OCI-LY7 (cell line): ENCODE measurements at regions of chr7 and their contacts with region 1.

Region 1: GRCh38 chr7:43700059-43700501 is 29.2 kb downstream of the COA1 start:
- DNase-seq: peak; percentile 77
- H3K4me3 ChIP-seq: no peak overlapping the region
- H3K27ac ChIP-seq: no peak overlapping the region
- H3K4me1 ChIP-seq: peaks cover 21% of the 10 kb centered on the region
- CTCF ChIP-seq: peak; percentile 95

Region 2: GRCh38 chr7:43439631-43440401 is 260.3 kb before region 1 on chr7:
- CTCF ChIA-PET with region 1: no interaction called
- POLR2A ChIA-PET with region 1: no interaction called
- intact Hi-C with region 1: loop called (anchors 10 kb)
- DNase-seq: peak; percentile 71
- H3K4me3 ChIP-seq: no peak overlapping the region
- H3K27ac ChIP-seq: no peak overlapping the region
- H3K4me1 ChIP-seq: no peaks in the 10 kb centered on the region
- CTCF ChIP-seq: peak; percentile 92

Region 3: DNA sequence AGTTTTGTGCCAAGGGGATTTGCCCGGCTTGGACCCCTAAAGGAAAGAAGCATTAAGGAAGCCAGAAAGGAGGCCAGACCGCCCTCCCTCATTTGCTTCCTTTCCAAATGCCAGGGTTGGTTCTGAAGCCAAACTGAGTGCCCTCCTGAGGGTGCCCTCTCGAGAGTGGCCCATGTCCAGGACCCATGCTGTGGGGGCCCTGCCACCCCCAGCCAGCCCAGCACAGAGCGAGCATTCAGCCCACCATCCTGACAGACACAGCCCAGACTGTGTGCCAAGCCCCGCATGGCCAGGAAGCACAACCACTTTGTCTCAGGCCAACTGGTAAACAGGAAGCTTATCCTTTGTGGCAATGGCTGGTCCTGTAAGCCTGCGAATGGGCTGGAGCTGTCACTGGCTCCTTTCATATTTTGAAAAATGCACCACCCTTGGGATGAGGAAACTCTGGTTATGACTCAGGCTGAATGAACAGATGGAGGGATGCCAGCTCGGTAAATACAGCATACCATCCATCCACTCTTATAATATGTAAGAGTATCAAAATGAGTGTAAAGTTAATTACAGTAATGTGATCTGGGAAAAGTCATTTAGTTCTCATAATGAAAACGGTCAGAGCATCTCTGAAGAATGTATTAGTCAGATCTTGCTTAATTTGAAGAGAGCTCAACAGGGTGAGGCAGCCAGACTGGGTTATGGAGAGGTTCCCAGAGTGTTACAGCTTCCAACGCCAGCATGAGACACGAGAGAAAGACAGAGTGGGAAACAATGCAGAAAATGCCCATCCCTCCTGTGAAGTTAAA is 52.2 kb before region 1 on chr7:
- CTCF ChIA-PET with region 1: no interaction called
- POLR2A ChIA-PET with region 1: interaction called, 11 read pairs
- intact Hi-C with region 1: loop called (anchors 2 kb)
- DNase-seq: peak; percentile 57
- H3K4me3 ChIP-seq: peak overlapping the region; percentile 64
- H3K27ac ChIP-seq: peak overlapping the region; percentile 97
- H3K4me1 ChIP-seq: peaks cover 82% of the 10 kb centered on the region
- CTCF ChIP-seq: no peak

Region 4: DNA sequence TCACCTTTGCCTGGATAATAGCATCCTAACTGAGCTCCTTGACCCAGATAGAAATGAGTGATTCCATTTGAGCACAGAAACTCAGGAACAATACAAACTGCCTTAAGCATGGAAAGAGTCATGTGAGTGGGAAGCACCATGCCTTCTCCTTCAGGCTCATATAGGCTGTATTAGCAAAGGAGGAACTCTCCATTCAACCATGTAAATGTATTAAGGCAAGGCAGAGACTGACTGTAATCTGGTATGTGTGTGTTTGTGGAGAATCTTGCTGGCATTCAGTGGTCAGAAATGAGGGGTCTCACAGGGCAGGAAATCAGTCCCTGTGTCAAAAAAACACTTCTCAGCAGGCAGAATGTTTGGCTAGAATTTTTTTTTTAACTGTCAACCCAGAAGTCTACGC is 11.0 kb before region 1 on chr7:
- CTCF ChIA-PET with region 1: no interaction called
- POLR2A ChIA-PET with region 1: interaction called, 21 read pairs
- intact Hi-C with region 1: no loop called
- DNase-seq: no peak
- H3K4me3 ChIP-seq: no peak overlapping the region
- H3K27ac ChIP-seq: no peak overlapping the region
- H3K4me1 ChIP-seq: no peaks in the 10 kb centered on the region
- CTCF ChIP-seq: no peak

Region 5: GRCh38 chr7:43834463-43835251 is 134.6 kb after region 1 on chr7:
- CTCF ChIA-PET with region 1: no interaction called
- POLR2A ChIA-PET with region 1: no interaction called
- intact Hi-C with region 1: loop called (anchors 1 kb)
- DNase-seq: peak; percentile 53
- H3K4me3 ChIP-seq: peak overlapping the region; percentile 54
- H3K27ac ChIP-seq: no peak overlapping the region
- H3K4me1 ChIP-seq: peaks cover 10% of the 10 kb centered on the region
- CTCF ChIP-seq: no peak

Region 6: DNA sequence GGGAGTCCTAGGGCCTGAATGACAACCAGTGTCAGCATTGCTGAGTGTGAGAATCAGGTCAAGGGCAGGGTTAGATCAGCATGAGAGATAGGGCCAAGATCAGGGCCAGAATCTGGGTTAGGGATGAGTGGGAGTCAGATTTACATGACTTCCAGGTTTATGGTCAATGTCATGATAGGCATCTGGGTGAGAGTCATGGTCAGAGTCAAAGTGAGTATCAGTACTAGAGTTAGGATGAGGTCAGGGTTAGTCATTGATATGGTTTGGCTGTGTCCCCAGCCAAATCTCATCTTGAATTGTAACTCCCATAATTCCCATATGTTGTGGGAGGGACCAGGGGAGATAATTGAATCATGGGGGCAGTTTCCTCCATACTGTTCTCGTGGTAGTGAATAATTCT is 156.9 kb after region 1 on chr7:
- CTCF ChIA-PET with region 1: no interaction called
- POLR2A ChIA-PET with region 1: no interaction called
- intact Hi-C with region 1: no loop called
- DNase-seq: no peak
- H3K4me3 ChIP-seq: no peak overlapping the region
- H3K27ac ChIP-seq: no peak overlapping the region
- H3K4me1 ChIP-seq: no peaks in the 10 kb centered on the region
- CTCF ChIP-seq: no peak